Caco-2 (cell line): ENCODE measurements at regions of chr11 and their contacts with region 1.

Region 1: GRCh38 chr11:57131080-57131790 is 50.5 kb upstream of the LRRC55 start:
- DNase-seq: peak; percentile 53 to 58
- H3K4me3 ChIP-seq: no peak overlapping the region
- H3K4me3 Mint-ChIP-seq: no peak overlapping the region
- H3K27ac Mint-ChIP-seq: no peak overlapping the region
- H3K4me1 ChIP-seq: no peaks in the 10 kb centered on the region; the same call in 1 of the 2 replicates
- H3K4me1 Mint-ChIP-seq: no peaks in the 10 kb centered on the region
- H3K27me3 ChIP-seq: 0 out of 2 replicates have a peak, but pooled peaks cover 2% of the 10 kb centered on the region
- H3K27me3 Mint-ChIP-seq: peaks cover 26% of the 10 kb centered on the region
- CTCF ChIP-seq: peak; percentile 63 to 77

Region 2: GRCh38 chr11:57031556-57031955 is 99.7 kb before region 1 on chr11:
- CTCF ChIA-PET with region 1: no interaction called
- POLR2A ChIA-PET with region 1: no interaction called
- intact Hi-C with region 1: no loop called
- DNase-seq: no peak
- H3K4me3 ChIP-seq: no peak overlapping the region
- H3K4me3 Mint-ChIP-seq: no peak overlapping the region
- H3K27ac Mint-ChIP-seq: no peak overlapping the region
- H3K4me1 ChIP-seq: no peaks in the 10 kb centered on the region
- H3K4me1 Mint-ChIP-seq: no peaks in the 10 kb centered on the region
- H3K27me3 ChIP-seq: no peaks in the 10 kb centered on the region
- H3K27me3 Mint-ChIP-seq: no peaks in the 10 kb centered on the region
- CTCF ChIP-seq: no peak

Region 3: GRCh38 chr11:57116654-57117053 is 14.6 kb before region 1 on chr11:
- CTCF ChIA-PET with region 1: interaction called, 3 read pairs
- POLR2A ChIA-PET with region 1: no interaction called
- intact Hi-C with region 1: loop called (anchors 1 kb)
- DNase-seq: peak; percentile 49 to 57
- H3K4me3 ChIP-seq: no peak overlapping the region
- H3K4me3 Mint-ChIP-seq: no peak overlapping the region
- H3K27ac Mint-ChIP-seq: no peak overlapping the region
- H3K4me1 ChIP-seq: no peaks in the 10 kb centered on the region; the same call in 1 of the 2 replicates
- H3K4me1 Mint-ChIP-seq: no peaks in the 10 kb centered on the region
- H3K27me3 ChIP-seq: no peaks in the 10 kb centered on the region
- H3K27me3 Mint-ChIP-seq: peaks cover 6% of the 10 kb centered on the region
- CTCF ChIP-seq: peak; percentile 60 to 74

Region 4: DNA sequence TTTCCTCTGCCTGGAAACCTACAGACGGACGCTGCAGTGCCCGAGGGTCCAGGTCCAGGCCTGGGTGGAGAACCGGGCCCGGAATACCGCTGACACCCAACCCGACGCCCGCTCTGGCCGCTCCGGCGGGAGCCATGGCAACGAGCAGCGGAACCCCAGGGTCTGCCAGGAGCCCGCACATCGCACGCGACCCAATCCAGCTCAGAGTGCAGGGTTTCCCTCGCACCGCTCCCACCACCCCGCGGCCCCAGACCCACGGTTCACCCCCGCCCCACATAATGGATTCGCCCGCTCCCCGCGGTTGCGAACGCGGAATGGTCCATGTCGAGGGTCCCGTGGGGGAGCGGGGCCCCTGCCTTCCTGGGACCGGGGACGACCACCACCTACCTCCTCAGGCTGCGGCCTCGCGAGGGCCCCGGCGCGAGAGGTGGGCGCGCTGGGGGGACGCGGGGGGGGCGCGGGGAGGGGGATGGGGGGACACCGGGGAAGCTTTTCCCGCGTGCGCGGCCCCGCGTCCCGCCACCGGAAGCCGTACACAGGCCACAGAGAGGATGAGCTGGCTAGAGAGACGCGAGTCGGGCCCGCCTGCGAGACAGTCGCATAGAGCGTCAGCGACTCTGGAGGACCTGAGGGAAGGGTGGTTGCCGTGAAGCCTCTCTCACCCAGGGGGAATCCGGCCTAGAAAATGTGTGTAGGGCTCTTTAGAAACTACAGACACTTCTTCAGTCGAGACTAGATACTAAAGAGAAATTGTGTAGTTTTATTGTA is 204.3 kb after region 1 on chr11 and contains the start of gene SSRP1:
- CTCF ChIA-PET with region 1: no interaction called
- POLR2A ChIA-PET with region 1: no interaction called
- intact Hi-C with region 1: loop called (anchors 5 kb)
- DNase-seq: peak; percentile 90 to 92
- H3K4me3 ChIP-seq: peak within 1 kb of the TSS; percentile 65
- H3K4me3 Mint-ChIP-seq: peak within 1 kb of the TSS; percentile 79
- H3K27ac Mint-ChIP-seq: peak within 1 kb of the TSS; percentile 87
- H3K4me1 ChIP-seq: peaks cover 16% of the 10 kb centered on the region
- H3K4me1 Mint-ChIP-seq: peaks cover 22% of the 10 kb centered on the region
- H3K27me3 ChIP-seq: no peaks in the 10 kb centered on the region
- H3K27me3 Mint-ChIP-seq: no peaks in the 10 kb centered on the region
- CTCF ChIP-seq: no peak
- total RNA-seq, gene SSRP1: 206 and 212 TPM in 2 replicates